HEK293T (cell line): ENCODE measurements at regions of chr3 and their contacts with region 1.

Region 1: DNA sequence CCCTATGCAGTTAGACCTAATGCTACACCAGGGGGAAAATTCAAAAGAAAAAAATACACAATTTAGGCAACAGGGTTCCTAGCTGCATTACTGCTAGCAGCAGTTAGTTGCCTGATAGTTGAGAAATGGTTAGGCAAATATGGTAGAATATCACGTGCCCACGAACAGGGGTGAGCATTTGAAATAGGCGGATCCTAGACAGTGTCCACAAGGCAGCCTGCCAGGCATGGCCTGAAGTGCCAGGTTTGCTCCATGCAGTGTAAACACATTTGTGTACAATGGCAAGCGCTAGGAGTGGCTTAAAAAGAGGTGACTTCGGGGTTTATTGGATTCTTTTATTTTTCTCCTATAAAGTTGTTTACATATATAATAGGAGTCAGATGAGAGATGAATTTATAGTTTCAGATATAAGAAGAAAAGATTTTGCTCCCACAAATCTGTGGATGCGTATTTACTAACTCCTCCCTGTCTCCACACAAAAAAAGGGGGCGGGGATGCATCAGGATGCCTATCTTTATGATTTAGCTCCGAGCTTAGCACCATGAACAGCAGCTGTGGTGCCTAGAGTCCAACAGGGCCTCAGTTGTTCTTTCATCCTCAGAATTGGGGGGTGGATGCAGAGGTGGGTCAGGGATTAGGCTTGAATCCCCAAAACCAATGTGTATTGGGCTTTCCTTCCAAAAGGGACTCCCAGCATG is 3.9 kb upstream of the TGM4 start:
- DNase-seq: no peak

Region 2: GRCh38 chr3:44712455-44713075 is 158.0 kb before region 1 on chr3 and contains the start of gene ZNF502:
- CTCF ChIA-PET with region 1: no interaction called
- POLR2A ChIA-PET with region 1: no interaction called
- DNase-seq: peak; percentile 68

Region 3: DNA sequence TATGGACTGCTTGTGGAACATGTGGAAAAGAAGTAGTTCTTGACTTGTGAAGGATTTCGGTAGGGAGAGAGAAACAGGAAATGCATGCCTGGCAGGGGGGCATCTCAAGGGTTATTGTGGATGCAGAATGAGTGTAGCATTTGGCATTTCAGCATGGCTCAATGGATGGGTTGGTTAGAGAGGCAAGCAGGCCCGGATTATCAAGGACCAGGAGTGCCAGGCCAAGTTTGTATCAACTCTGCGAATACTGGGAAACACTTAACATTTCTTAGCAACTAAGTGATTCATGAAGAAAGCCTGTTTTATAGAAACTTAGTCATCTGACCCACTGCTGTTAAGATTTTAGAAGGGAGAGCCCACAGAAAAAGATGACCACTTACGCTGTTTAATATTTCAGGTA is 75.3 kb before region 1 on chr3:
- CTCF ChIA-PET with region 1: interaction called, 11 read pairs
- POLR2A ChIA-PET with region 1: no interaction called
- DNase-seq: no peak